ENCODE measurements at regions of chr19 and their contacts with region 1.

Region 1: GRCh38 chr19:18636183-18636968 is 452 bp upstream of the KLHL26 start:
- DNase-seq: peak; percentile 97 to 99 (median 99)
- H3K4me3 ChIP-seq: peak overlapping the region; percentile 47 to 82
- H3K4me3 Mint-ChIP-seq: peak overlapping the region; percentile 84 to 90 (median 88)
- H3K27ac ChIP-seq: peak overlapping the region; percentile 84
- H3K27ac Mint-ChIP-seq: peak overlapping the region; percentile 77 to 96 (median 94)
- H3K4me1 ChIP-seq: peaks cover 24% of the 10 kb centered on the region
- H3K4me1 Mint-ChIP-seq: peaks cover 20 to 45% (median 33%) of the 10 kb centered on the region in 4 donors
- H3K27me3 ChIP-seq: no peaks in the 10 kb centered on the region
- H3K27me3 Mint-ChIP-seq: peaks cover 0 to 2% of the 10 kb centered on the region in 2 donors

Region 2: GRCh38 chr19:18152444-18152816 is 483.9 kb before region 1 on chr19:
- CTCF ChIA-PET with region 1: no interaction called
- POLR2A ChIA-PET with region 1: no interaction called
- intact Hi-C with region 1: no loop called
- DNase-seq: peak; percentile 96 to 99 (median 96)
- H3K4me3 ChIP-seq: peak overlapping the region; percentile 74 to 79
- H3K4me3 Mint-ChIP-seq: peak overlapping the region; percentile 84 to 95 (median 91)
- H3K27ac ChIP-seq: peak overlapping the region; percentile 74
- H3K27ac Mint-ChIP-seq: peak overlapping the region; percentile 88 to 99 (median 97)
- H3K4me1 ChIP-seq: peaks cover 28% of the 10 kb centered on the region
- H3K4me1 Mint-ChIP-seq: peaks cover 14 to 38% (median 21%) of the 10 kb centered on the region in 4 donors
- H3K27me3 ChIP-seq: no peaks in the 10 kb centered on the region
- H3K27me3 Mint-ChIP-seq: no peaks in the 10 kb centered on the region

Region 3: DNA sequence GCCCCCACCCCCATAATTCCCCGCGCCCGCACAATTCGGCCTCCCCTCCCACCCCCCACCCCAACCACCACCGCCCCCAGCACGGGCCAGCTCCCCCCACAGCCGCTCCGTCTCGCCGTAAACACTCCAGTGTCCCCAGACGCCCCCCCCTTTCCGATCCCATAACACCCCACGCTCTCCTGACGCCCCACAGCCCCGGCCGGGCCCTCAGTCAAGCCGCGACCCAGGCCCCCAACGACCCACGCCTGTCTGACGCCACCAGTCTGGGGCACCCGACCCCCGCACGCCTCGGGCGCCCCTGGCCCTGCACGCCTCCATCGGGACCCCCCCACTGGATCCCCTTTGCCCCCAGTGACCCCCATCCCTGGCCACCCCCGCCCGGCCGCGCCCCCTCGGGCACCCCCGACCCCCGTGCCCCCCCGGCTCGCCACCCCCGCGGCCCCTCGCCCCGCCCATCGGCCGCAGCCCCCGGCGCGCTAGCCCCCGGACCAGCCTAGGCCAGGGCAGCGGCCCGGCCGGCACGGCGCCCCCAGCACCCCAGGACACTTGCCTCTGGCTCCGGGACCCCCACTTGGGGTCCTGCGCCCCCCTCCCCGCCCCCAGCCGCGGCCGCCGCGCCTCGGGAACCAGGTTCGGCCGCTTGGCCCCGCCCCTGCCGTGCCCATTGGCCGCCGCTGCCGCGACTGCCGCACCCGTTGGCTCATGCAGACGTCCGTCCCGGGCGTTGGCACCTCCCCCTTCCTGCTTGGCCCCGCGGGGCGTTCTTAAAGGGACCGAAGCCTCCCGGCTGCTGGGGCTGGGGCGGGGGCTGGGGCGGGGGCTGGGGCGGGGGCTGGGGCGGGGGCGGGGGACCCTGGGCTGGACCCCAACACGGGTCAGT is 93.2 kb before region 1 on chr19 and contains the start of gene FKBP8:
- CTCF ChIA-PET with region 1: interaction called, 3 read pairs
- POLR2A ChIA-PET with region 1: interaction called, 4 read pairs
- intact Hi-C with region 1: loop called (anchors 5 kb)
- DNase-seq: peak; percentile 89 to 94 (median 91)
- H3K4me3 ChIP-seq: peak within 1 kb of the TSS; percentile 52 to 59
- H3K4me3 Mint-ChIP-seq: peak within 1 kb of the TSS; percentile 91 to 100 (median 96)
- H3K27ac ChIP-seq: peak within 1 kb of the TSS; percentile 78
- H3K27ac Mint-ChIP-seq: peak within 1 kb of the TSS; percentile 97 to 99 (median 98)
- H3K4me1 ChIP-seq: peaks cover 25% of the 10 kb centered on the region
- H3K4me1 Mint-ChIP-seq: peaks cover 8 to 35% (median 21%) of the 10 kb centered on the region in 4 donors
- H3K27me3 ChIP-seq: no peaks in the 10 kb centered on the region
- H3K27me3 Mint-ChIP-seq: no peaks in the 10 kb centered on the region
- total RNA-seq, gene FKBP8: 231 to 249 TPM

Region 4: GRCh38 chr19:18611327-18612050 is 24.9 kb before region 1 on chr19:
- CTCF ChIA-PET with region 1: interaction called, 3 read pairs
- POLR2A ChIA-PET with region 1: no interaction called
- intact Hi-C with region 1: loop called (anchors 1 kb)
- DNase-seq: no peak
- H3K4me3 ChIP-seq: peak overlapping the region in 1 of 2 donors; percentile 45
- H3K4me3 Mint-ChIP-seq: peak overlapping the region; percentile 46 to 89 (median 82)
- H3K27ac ChIP-seq: no peak overlapping the region
- H3K27ac Mint-ChIP-seq: peak overlapping the region in 2 of 7 donors; percentile 20 to 38
- H3K4me1 ChIP-seq: peaks cover 22% of the 10 kb centered on the region
- H3K4me1 Mint-ChIP-seq: peaks cover 12 to 49% (median 18%) of the 10 kb centered on the region in 4 donors
- H3K27me3 ChIP-seq: peaks cover 56% of the 10 kb centered on the region
- H3K27me3 Mint-ChIP-seq: peaks cover 47 to 56% of the 10 kb centered on the region in 2 donors

Region 5: DNA sequence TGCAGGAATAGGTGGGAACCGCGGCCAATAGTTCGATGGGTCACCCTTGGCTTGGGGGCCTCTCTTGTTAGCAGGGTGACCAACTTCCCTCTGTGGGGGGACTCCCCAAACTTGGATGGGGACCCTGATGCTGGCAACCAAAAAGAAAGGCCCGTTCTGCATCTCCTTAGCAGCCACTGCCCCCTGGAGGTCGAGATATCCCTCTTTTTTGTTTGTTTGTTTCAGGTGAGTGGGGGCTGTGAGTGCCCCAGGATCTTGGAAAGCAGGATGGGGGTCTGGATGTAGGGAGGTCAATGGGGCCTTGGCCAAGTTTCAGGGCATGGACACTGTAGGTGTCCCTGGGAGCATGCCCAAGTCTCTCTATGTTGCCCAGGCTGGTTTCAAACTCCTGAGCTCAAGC is 39.4 kb after region 1 on chr19:
- CTCF ChIA-PET with region 1: no interaction called
- POLR2A ChIA-PET with region 1: no interaction called
- intact Hi-C with region 1: no loop called
- DNase-seq: peak in 2 of 5 donors; percentile 19 to 20
- H3K4me3 ChIP-seq: no peak overlapping the region
- H3K4me3 Mint-ChIP-seq: no peak overlapping the region
- H3K27ac ChIP-seq: no peak overlapping the region
- H3K27ac Mint-ChIP-seq: peak overlapping the region in 1 of 7 donors; percentile 8
- H3K4me1 ChIP-seq: no peaks in the 10 kb centered on the region
- H3K4me1 Mint-ChIP-seq: no peaks in the 10 kb centered on the region
- H3K27me3 ChIP-seq: no peaks in the 10 kb centered on the region
- H3K27me3 Mint-ChIP-seq: no peaks in the 10 kb centered on the region

Region 6: DNA sequence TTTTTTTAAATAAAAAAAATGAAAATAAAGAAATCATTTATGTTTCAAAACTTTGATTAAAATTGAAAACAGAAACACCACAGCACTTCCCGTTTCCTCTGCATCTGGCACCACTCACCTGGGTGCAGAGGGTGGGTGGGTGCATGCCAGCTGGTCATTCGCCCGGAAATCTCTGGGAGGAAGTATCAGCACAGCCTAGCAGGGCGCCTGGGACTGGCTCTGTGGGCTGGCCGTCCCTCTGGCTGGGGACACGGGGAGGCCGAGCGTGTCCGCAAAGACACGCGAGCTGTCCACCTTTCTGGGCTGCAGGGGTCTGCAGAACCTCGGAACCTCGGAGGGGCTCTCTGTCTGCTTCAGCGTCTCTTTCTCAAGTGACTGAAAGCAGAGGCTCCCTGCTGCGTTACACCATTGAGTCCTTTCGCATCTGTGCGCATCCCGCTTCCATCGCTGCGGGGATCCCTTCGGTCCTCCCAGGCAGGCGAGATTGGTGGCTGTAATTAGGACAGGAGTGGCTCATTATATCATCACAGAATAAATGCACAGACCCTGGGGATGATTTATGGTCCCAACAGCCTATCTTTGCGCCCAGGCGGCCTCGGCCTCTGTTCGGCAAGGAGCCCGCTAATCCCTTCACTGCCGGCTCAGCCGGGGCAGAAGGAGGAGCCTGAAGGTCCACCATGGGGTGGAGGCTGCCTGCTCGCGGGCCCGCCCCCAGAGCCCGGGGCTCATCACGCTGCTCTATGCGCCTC is 64.3 kb after region 1 on chr19:
- CTCF ChIA-PET with region 1: no interaction called
- POLR2A ChIA-PET with region 1: no interaction called
- intact Hi-C with region 1: loop called (anchors 2 kb)
- DNase-seq: peak; percentile 69 to 75 (median 70)
- H3K4me3 ChIP-seq: peak overlapping the region; percentile 57 to 88
- H3K4me3 Mint-ChIP-seq: peak overlapping the region; percentile 87 to 93 (median 90)
- H3K27ac ChIP-seq: peak overlapping the region; percentile 71
- H3K27ac Mint-ChIP-seq: peak overlapping the region; percentile 86 to 95 (median 88)
- H3K4me1 ChIP-seq: peaks cover 37% of the 10 kb centered on the region
- H3K4me1 Mint-ChIP-seq: peaks cover 21 to 48% (median 36%) of the 10 kb centered on the region in 4 donors
- H3K27me3 ChIP-seq: no peaks in the 10 kb centered on the region
- H3K27me3 Mint-ChIP-seq: no peaks in the 10 kb centered on the region

Region 7: DNA sequence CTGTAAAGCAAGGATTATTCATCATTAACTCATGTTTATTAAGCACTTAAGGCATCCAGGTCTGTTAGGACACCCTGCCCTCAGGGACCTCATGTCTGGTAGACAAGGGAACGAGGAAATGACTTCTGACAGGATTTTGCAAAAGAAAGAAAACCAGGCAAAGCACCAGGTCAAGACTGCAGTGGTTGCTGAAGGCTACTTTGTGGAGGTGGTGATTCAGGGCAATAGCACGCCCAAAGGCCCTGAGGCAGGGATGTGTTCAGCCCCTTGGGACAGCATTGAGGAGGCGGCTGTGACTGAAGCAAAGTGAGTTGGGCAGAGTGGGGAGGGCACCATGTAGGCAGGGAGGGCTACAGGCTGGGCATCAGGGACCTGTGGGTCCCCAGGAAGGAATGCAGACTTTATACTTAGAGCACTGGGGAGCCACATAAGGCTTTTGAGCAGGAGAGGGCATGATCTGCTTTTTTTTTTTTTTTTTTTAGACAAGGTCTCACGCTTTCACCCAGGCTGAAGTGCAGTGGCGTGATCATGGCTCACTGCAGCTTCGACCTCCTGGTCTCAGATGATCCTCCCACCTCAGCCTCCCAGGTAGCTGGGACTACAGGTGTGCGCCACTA is 315.4 kb after region 1 on chr19:
- CTCF ChIA-PET with region 1: no interaction called
- POLR2A ChIA-PET with region 1: no interaction called
- intact Hi-C with region 1: no loop called
- DNase-seq: no peak
- H3K4me3 ChIP-seq: no peak overlapping the region
- H3K4me3 Mint-ChIP-seq: no peak overlapping the region
- H3K27ac ChIP-seq: no peak overlapping the region
- H3K27ac Mint-ChIP-seq: no peak overlapping the region
- H3K4me1 ChIP-seq: no peaks in the 10 kb centered on the region
- H3K4me1 Mint-ChIP-seq: peaks cover 0 to 8% (median under 1%) of the 10 kb centered on the region in 4 donors
- H3K27me3 ChIP-seq: no peaks in the 10 kb centered on the region
- H3K27me3 Mint-ChIP-seq: peaks cover 0 to 6% of the 10 kb centered on the region in 2 donors